ENCODE measurements at regions of chr10 and their contacts with region 1.

Region 1: GRCh38 chr10:42454313-42454712 is 184.1 kb downstream of the ZNF33B start:
- DNase-seq: no peak
- ATAC-seq: no peak
- H3K4me3 ChIP-seq: no peak overlapping the region
- H3K27ac ChIP-seq: no peak overlapping the region
- H3K4me1 ChIP-seq: no peaks in the 10 kb centered on the region
- H3K27me3 ChIP-seq: no peaks in the 10 kb centered on the region
- CTCF ChIP-seq: no peak

Region 2: GRCh38 chr10:44261710-44262455 is 1807.6 kb after region 1 on chr10:
- CTCF ChIA-PET with region 1: interaction called, 12 read pairs
- POLR2A ChIA-PET with region 1: no interaction called
- in situ Hi-C with region 1: no loop called
- intact Hi-C with region 1: no loop called
- DNase-seq: no peak
- ATAC-seq: no peak
- H3K4me3 ChIP-seq: no peak overlapping the region
- H3K27ac ChIP-seq: no peak overlapping the region
- H3K4me1 ChIP-seq: no peaks in the 10 kb centered on the region
- H3K27me3 ChIP-seq: no peaks in the 10 kb centered on the region
- CTCF ChIP-seq: no peak